CD14-positive monocyte (primary cell): ENCODE measurements at regions of chrX and their contacts with region 1.

Region 1: GRCh38 chrX:1292575-1293290 is 24.1 kb downstream of the CSF2RA start:
- DNase-seq: no peak
- H3K4me3 ChIP-seq: no peak overlapping the region
- H3K4me3 Mint-ChIP-seq: no peak overlapping the region
- H3K27ac ChIP-seq: peak overlapping the region; percentile 24 to 57
- H3K27ac Mint-ChIP-seq: peak overlapping the region; percentile 9 to 80 (median 60)
- H3K4me1 ChIP-seq: peaks cover 0 to 13% of the 10 kb centered on the region in 2 donors
- H3K4me1 Mint-ChIP-seq: peaks cover 20% of the 10 kb centered on the region
- H3K27me3 ChIP-seq: no peaks in the 10 kb centered on the region
- H3K27me3 Mint-ChIP-seq: peaks cover 0 to 2% (median 0%) of the 10 kb centered on the region in 3 donors
- CTCF ChIP-seq: no peak

Region 2: GRCh38 chrX:1205680-1206611 is 86.8 kb before region 1 on chrX:
- intact Hi-C with region 1: no loop called
- DNase-seq: peak; percentile 64 to 77 (median 71)
- H3K4me3 ChIP-seq: peak overlapping the region; percentile 32 to 69 (median 43)
- H3K4me3 Mint-ChIP-seq: peak overlapping the region; percentile 69 to 77
- H3K27ac ChIP-seq: no peak overlapping the region
- H3K27ac Mint-ChIP-seq: peak overlapping the region in 5 of 7 donors; percentile 44 to 66 (median 46)
- H3K4me1 ChIP-seq: peaks cover 27 to 29% of the 10 kb centered on the region in 2 donors
- H3K4me1 Mint-ChIP-seq: peaks cover 34% of the 10 kb centered on the region
- H3K27me3 ChIP-seq: no peaks in the 10 kb centered on the region
- H3K27me3 Mint-ChIP-seq: peaks cover 6 to 10% (median 7%) of the 10 kb centered on the region in 3 donors
- CTCF ChIP-seq: no peak

Region 3: DNA sequence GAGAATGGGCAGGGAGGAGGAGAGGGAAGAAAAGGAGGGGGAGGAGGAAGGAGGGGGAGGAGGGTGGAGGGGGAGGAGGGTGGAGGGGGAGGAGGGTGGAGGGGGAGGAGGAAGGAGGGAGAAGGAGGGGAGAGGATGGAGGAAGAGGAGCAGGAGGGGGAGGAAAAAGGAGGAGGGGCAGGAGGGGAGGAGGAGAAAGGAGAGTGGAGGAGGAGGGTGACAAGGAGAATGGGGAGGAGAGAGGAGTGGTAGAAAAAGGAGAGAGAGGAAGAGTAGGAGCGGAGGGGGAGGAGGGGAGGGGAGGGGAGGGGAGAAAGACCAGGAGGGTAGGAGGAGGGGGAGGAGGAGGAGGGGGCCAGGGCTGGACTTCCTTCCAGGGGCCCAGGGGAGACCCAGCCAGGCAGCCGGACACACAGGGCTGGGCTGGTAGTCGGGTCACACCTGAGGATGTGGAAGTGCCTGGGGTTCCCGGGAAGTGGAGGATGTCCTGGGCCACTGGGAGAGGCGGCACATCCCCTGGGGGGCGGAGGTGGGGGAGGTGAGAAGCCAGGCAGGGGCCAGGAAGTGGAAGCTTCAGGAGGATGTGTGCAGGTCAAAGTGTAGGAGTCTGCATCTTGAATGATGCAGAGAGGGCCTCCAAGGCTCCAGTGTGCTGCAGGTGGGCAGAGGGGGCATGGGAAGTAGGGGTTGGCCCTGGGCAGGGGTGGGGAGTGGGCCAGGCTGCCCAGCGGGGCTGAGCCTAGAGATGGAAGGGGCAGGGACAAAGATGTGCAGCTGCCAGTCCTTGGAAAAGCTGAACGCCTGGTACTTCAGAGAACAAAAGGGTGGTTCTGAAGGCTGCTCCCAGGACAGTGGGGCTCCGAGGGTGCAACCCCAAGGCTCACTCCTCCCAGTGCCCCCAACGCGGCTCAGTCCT is 62.7 kb after region 1 on chrX:
- intact Hi-C with region 1: loop called in 1 of 2 experiments (anchors 5 kb)
- DNase-seq: no peak
- H3K4me3 ChIP-seq: no peak overlapping the region
- H3K4me3 Mint-ChIP-seq: no peak overlapping the region
- H3K27ac ChIP-seq: no peak overlapping the region
- H3K27ac Mint-ChIP-seq: no peak overlapping the region
- H3K4me1 ChIP-seq: peaks cover 0 to 6% of the 10 kb centered on the region in 2 donors
- H3K4me1 Mint-ChIP-seq: peaks cover 3% of the 10 kb centered on the region
- H3K27me3 ChIP-seq: no peaks in the 10 kb centered on the region
- H3K27me3 Mint-ChIP-seq: peaks cover 1 to 3% (median 3%) of the 10 kb centered on the region in 3 donors
- CTCF ChIP-seq: no peak